Mammary epithelial cell (primary cell): ENCODE measurements at regions of chr10 and their contacts with region 1.

Region 1: GRCh38 chr10:89217057-89217990 is 10.2 kb upstream of the CH25H start:
- DNase-seq: peak; percentile 36
- H3K4me3 ChIP-seq: no peak overlapping the region
- H3K27ac ChIP-seq: peak overlapping the region; percentile 15
- H3K4me1 ChIP-seq: peaks cover 10% of the 10 kb centered on the region
- H3K27me3 ChIP-seq: no peaks in the 10 kb centered on the region
- CTCF ChIP-seq: peak; percentile 61 to 69

Region 2: GRCh38 chr10:88835096-88835909 is 382.0 kb before region 1 on chr10:
- CTCF ChIA-PET with region 1: no interaction called
- dilution Hi-C with region 1: no loop called
- in situ Hi-C with region 1: loop called (anchors 10 to 25 kb)
- intact Hi-C with region 1: loop called (anchors 5 kb)
- DNase-seq: peak; percentile 78
- H3K4me3 ChIP-seq: no peak overlapping the region
- H3K27ac ChIP-seq: no peak overlapping the region
- H3K4me1 ChIP-seq: no peaks in the 10 kb centered on the region
- H3K27me3 ChIP-seq: no peaks in the 10 kb centered on the region
- CTCF ChIP-seq: peak; percentile 86 to 90

Region 3: DNA sequence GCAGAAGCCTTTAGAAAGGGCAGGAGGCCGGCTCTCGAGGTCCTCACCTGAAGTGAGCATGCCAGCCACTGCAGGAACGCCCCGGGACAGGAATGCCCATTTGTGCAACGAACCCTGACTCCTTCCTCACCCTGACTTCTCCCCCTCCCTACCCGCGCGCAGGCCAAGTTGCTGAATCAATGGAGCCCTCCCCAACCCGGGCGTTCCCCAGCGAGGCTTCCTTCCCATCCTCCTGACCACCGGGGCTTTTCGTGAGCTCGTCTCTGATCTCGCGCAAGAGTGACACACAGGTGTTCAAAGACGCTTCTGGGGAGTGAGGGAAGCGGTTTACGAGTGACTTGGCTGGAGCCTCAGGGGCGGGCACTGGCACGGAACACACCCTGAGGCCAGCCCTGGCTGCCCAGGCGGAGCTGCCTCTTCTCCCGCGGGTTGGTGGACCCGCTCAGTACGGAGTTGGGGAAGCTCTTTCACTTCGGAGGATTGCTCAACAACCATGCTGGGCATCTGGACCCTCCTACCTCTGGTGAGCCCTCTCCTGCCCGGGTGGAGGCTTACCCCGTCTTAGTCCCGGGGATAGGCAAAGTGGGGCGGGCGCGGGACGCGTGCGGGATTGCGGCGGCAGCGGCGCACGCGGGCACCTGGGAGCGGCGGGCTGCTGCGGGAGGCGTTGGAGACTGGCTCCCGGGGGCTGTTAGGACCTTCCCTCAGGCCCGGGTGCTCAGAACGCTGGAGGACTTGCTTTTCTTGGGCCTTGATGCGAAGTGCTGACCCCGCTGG is 226.8 kb before region 1 on chr10 and contains the start of gene FAS:
- CTCF ChIA-PET with region 1: interaction called, 4 read pairs
- dilution Hi-C with region 1: no loop called
- in situ Hi-C with region 1: no loop called
- intact Hi-C with region 1: loop called (anchors 1 kb)
- DNase-seq: peak; percentile 96
- H3K4me3 ChIP-seq: peak within 1 kb of the TSS; percentile 87 to 94 (median 93)
- H3K27ac ChIP-seq: peak within 1 kb of the TSS; percentile 97
- H3K4me1 ChIP-seq: peaks cover 27% of the 10 kb centered on the region
- H3K27me3 ChIP-seq: no peaks in the 10 kb centered on the region
- CTCF ChIP-seq: no peak
- total RNA-seq, gene FAS: 50.0 to 71.8 TPM

Region 4: GRCh38 chr10:89029785-89030437 is 187.4 kb before region 1 on chr10:
- CTCF ChIA-PET with region 1: no interaction called
- dilution Hi-C with region 1: no loop called
- in situ Hi-C with region 1: loop called in 1 of 2 experiments (anchors 5 kb)
- intact Hi-C with region 1: loop called (anchors 1 kb)
- DNase-seq: peak; percentile 62
- H3K4me3 ChIP-seq: no peak overlapping the region
- H3K27ac ChIP-seq: no peak overlapping the region
- H3K4me1 ChIP-seq: peaks cover 18% of the 10 kb centered on the region
- H3K27me3 ChIP-seq: no peaks in the 10 kb centered on the region
- CTCF ChIP-seq: peak; percentile 77 to 86

Region 5: DNA sequence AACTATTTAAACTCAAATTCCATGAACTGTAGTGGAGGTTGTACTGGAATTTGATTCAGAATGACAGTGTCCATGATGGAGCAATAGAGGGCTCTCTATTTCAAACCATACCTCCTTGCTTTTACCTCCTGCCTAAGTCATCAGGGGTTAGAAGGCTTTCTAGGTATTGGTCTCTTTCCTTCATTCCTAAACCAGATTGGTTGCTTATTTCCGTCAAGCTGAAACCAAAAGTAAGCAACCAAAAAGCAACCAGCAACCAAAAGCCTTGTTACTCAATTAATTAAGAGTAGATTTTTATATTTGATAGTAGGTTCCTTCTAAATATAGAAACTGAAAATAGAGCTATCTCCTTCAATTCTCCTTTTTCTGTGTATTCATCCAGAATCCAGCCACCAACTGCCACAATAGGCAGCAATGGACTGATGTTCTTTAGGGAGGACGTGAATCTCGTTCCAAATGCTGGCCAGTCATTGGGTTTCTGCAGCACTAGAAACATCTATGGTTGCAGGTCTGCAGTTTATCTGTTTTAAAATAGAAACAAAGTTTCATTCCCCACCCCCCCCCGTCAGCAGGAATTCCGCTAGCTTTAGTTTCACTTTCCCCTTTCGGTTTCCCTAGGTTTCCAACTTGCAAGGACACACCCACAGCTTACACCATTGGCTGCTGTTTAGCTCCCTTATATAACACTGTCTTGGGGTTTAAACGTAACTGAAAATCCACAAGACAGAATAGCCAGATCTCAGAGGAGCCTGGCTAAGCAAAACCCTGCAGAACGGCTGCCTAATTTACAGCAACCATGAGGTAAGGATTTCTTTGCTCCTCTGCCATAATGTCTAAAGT is 174.8 kb after region 1 on chr10 and contains the start of gene IFIT1:
- CTCF ChIA-PET with region 1: no interaction called
- dilution Hi-C with region 1: no loop called
- in situ Hi-C with region 1: no loop called
- intact Hi-C with region 1: loop called (anchors 1 kb)
- DNase-seq: peak; percentile 78
- H3K4me3 ChIP-seq: peak within 1 kb of the TSS; percentile 57 to 97 (median 89)
- H3K27ac ChIP-seq: peak within 1 kb of the TSS; percentile 81
- H3K4me1 ChIP-seq: peaks cover 14% of the 10 kb centered on the region
- H3K27me3 ChIP-seq: no peaks in the 10 kb centered on the region
- CTCF ChIP-seq: peak in 1 of 2 donors; percentile 18
- total RNA-seq, gene IFIT1: 0.50 to 1.2 TPM